ENCODE measurements at regions of chr5 and their contacts with region 1.

Region 1: GRCh38 chr5:169583424-169584204 is at the start of gene SPDL1:
- DNase-seq: peak; percentile 87 to 97 (median 93)
- ATAC-seq: peak; percentile 93
- H3K4me3 ChIP-seq: peak within 1 kb of the TSS; percentile 76 to 89
- H3K4me3 Mint-ChIP-seq: peak within 1 kb of the TSS; percentile 99
- H3K27ac ChIP-seq: peak within 1 kb of the TSS; percentile 65 to 74
- H3K27ac Mint-ChIP-seq: peak within 1 kb of the TSS; percentile 94
- H3K4me1 ChIP-seq: peaks cover 5% of the 10 kb centered on the region
- H3K4me1 Mint-ChIP-seq: peaks cover 21% of the 10 kb centered on the region
- H3K27me3 ChIP-seq: no peaks in the 10 kb centered on the region
- H3K27me3 Mint-ChIP-seq: no peaks in the 10 kb centered on the region
- CTCF ChIP-seq: no peak
- total RNA-seq, gene SPDL1: 5.2 to 6.9 TPM

Region 2: GRCh38 chr5:168486136-168486879 is 1097.3 kb before region 1 on chr5 and contains the start of gene RARS1:
- CTCF ChIA-PET with region 1: no interaction called
- POLR2A ChIA-PET with region 1: no interaction called
- intact Hi-C with region 1: loop called (anchors 2 kb)
- DNase-seq: peak; percentile 73 to 94 (median 88)
- ATAC-seq: peak; percentile 89
- H3K4me3 ChIP-seq: peak within 1 kb of the TSS; percentile 94 to 96
- H3K4me3 Mint-ChIP-seq: peak within 1 kb of the TSS; percentile 100
- H3K27ac ChIP-seq: peak within 1 kb of the TSS; percentile 71 to 79
- H3K27ac Mint-ChIP-seq: peak within 1 kb of the TSS; percentile 96
- H3K4me1 ChIP-seq: peaks cover 15% of the 10 kb centered on the region
- H3K4me1 Mint-ChIP-seq: peaks cover 37% of the 10 kb centered on the region
- H3K27me3 ChIP-seq: no peaks in the 10 kb centered on the region
- H3K27me3 Mint-ChIP-seq: peaks cover 5% of the 10 kb centered on the region
- CTCF ChIP-seq: peak; percentile 96
- total RNA-seq, gene RARS1: 80.2 to 91.9 TPM

Region 3: DNA sequence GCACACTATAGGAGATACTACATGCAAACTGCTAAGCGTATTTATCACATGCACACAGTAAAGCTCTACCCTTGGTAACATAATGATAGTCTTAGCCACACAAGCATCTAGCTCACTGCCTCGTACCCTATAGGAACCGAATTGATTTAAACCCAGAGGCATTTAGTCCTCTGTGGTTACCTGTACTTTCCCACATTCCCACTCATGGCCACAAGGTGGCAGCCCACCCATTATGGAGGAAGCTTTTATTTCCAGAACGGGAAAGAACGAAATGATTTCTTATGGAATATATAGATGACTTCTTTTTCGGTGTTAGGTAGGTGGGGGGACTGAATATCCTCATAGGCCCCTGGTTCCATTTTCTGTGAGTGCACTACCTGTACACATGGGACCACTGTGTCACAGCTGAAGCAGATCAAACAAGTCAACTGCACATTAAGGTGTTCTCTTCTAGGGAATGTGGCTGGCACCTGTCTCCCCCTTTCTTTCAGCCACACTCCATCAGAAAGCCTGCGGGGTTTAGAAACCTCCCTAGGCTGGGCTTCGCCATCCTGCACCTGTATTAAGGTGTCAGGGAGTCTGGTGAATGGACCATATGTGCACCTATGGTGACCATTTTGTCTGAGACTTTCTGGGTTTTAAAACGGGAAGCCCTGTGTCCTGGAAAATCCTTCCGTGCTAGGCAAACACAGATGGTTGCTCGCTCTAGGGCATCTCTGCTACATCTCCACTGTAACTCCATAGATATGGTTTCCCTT is 595.9 kb before region 1 on chr5:
- CTCF ChIA-PET with region 1: interaction called, 20 read pairs
- POLR2A ChIA-PET with region 1: interaction called, 4 read pairs
- intact Hi-C with region 1: loop called in 1 of 2 experiments (anchors 1 kb)
- DNase-seq: peak in 7 of 9 experiments; percentile 26 to 57 (median 45)
- ATAC-seq: no peak
- H3K4me3 ChIP-seq: no peak overlapping the region
- H3K4me3 Mint-ChIP-seq: no peak overlapping the region
- H3K27ac ChIP-seq: no peak overlapping the region
- H3K27ac Mint-ChIP-seq: no peak overlapping the region
- H3K4me1 ChIP-seq: no peaks in the 10 kb centered on the region
- H3K4me1 Mint-ChIP-seq: no peaks in the 10 kb centered on the region
- H3K27me3 ChIP-seq: peaks cover 0 to 5% of the 10 kb centered on the region in 2 experiments
- H3K27me3 Mint-ChIP-seq: peaks cover 15% of the 10 kb centered on the region
- CTCF ChIP-seq: peak; percentile 64

Region 4: DNA sequence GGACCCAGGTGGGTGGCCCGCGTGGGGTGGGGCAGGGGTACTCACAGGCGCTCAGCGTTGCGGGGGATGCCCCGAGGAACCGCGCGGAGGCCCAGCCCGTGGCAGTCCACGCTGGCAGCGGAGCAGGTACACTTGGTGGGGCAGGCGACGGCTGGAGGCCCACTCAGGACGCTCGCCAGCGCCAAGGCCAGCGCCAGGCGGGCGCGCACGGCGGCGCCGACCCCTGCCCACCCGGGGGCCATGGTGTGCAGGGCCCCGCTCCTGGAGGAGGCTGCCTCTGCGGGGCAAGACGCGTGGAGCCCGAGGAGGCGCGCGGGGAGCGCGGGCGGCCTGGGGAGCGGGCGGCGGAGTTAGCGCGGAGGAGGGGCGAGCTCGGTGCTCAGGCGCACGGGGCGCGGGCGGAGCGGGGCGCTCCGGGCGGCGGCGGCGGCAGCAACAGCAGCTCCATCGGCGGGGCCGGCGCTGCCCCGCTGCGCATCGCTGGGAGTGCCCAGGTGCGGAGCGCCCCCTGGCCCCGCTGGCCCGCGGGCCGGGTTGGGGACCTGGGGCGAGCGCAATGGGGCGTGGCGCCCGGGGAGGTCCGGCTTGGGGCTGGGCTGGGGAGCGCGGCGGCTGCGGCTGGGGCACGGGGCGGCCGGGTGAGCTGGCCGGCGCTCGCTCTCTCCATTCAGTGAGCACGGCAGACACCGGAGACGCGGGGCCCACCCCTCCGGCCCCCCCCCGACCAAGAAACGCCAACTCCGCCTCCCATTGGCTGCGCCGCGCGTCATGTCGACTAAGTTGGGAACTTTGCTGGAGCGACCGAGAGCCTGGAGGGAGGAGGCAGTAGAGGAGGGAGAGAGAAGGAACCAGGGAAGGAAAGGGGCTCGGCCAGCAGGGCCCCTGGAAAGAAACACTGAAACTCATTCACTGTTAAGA is 282.9 kb before region 1 on chr5 and contains the start of gene SLIT3:
- CTCF ChIA-PET with region 1: no interaction called
- POLR2A ChIA-PET with region 1: no interaction called
- intact Hi-C with region 1: no loop called
- DNase-seq: no peak
- ATAC-seq: no peak
- H3K4me3 ChIP-seq: no peak within 1 kb of the TSS
- H3K4me3 Mint-ChIP-seq: no peak within 1 kb of the TSS
- H3K27ac ChIP-seq: no peak within 1 kb of the TSS
- H3K27ac Mint-ChIP-seq: no peak within 1 kb of the TSS
- H3K4me1 ChIP-seq: no peaks in the 10 kb centered on the region
- H3K4me1 Mint-ChIP-seq: peaks cover 8% of the 10 kb centered on the region
- H3K27me3 ChIP-seq: peaks cover 3 to 8% of the 10 kb centered on the region in 2 experiments
- H3K27me3 Mint-ChIP-seq: peaks cover 41% of the 10 kb centered on the region
- CTCF ChIP-seq: no peak
- total RNA-seq, gene SLIT3: not detected

Region 5: DNA sequence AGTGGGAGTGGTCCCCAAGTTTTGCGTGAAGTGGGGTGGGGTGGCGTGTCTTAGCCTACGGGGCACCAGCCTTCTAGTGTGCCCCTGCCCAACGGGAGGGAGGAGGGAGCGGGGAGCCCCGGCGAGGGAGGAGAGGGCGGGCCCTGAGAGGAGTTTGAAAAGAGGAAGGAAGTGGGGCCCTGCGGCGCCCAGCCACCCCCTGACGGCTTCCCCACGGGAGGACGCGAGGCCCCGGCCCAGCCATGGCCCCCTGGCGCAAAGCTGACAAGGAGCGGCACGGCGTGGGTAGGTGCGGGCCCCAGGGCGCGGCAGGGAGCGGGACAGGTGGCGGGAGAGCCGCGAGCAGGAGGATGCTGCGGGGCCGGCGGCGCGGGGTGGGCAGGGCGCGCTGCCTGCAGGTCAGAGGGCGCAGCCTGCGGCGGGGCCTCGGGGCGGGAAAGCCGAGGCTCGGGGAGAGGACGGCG is 53.5 kb after region 1 on chr5 and contains the start of gene DOCK2:
- CTCF ChIA-PET with region 1: interaction called, 4 read pairs
- POLR2A ChIA-PET with region 1: interaction called, 7 read pairs
- intact Hi-C with region 1: loop called (anchors 1 to 2 kb)
- DNase-seq: peak; percentile 18 to 79 (median 72)
- ATAC-seq: peak; percentile 76
- H3K4me3 ChIP-seq: peak within 1 kb of the TSS; percentile 70 to 92
- H3K4me3 Mint-ChIP-seq: peak within 1 kb of the TSS; percentile 94
- H3K27ac ChIP-seq: peak within 1 kb of the TSS; percentile 76 to 90
- H3K27ac Mint-ChIP-seq: peak within 1 kb of the TSS; percentile 94
- H3K4me1 ChIP-seq: peaks cover 36% of the 10 kb centered on the region
- H3K4me1 Mint-ChIP-seq: peaks cover 50% of the 10 kb centered on the region
- H3K27me3 ChIP-seq: no peaks in the 10 kb centered on the region
- H3K27me3 Mint-ChIP-seq: no peaks in the 10 kb centered on the region
- CTCF ChIP-seq: no peak
- total RNA-seq, gene DOCK2: 194 to 197 TPM

Region 6: DNA sequence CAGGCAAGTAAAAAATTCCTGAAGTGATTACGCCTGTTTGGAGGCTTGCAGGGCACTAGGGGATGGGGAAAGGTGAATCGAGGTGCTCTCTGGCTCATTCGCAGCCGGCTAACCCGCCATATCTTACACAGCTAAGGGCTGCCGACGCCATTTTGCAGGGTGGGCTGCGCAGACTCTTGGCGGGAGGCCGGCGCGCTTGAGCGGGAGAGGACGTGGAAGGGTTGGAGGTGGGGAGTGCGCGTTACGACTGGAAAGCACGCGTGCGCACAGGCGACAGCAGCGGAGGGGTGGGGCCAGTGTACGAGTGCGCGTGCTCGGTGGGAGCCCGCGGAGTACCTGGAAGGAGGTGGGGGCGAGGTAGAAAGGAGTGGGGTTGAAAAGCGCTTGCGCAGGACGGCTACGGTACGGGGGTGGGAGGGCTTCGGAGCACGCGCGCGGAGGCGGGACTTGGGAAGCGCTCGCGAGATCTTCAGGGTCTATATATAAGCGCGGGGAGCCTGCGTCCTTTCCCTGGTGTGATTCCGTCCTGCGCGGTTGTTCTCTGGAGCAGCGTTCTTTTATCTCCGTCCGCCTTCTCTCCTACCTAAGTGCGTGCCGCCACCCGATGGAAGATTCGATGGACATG is 1803.8 kb after region 1 on chr5 and contains the start of gene NPM1:
- CTCF ChIA-PET with region 1: no interaction called
- POLR2A ChIA-PET with region 1: no interaction called
- intact Hi-C with region 1: loop called in 1 of 2 experiments (anchors 10 kb)
- DNase-seq: peak; percentile 95 to 100 (median 97)
- ATAC-seq: peak; percentile 88
- H3K4me3 ChIP-seq: peak within 1 kb of the TSS; percentile 92 to 96
- H3K4me3 Mint-ChIP-seq: peak within 1 kb of the TSS; percentile 96
- H3K27ac ChIP-seq: peak within 1 kb of the TSS; percentile 94 to 97
- H3K27ac Mint-ChIP-seq: peak within 1 kb of the TSS; percentile 99
- H3K4me1 ChIP-seq: peaks cover 45% of the 10 kb centered on the region
- H3K4me1 Mint-ChIP-seq: peaks cover 46% of the 10 kb centered on the region
- H3K27me3 ChIP-seq: no peaks in the 10 kb centered on the region
- H3K27me3 Mint-ChIP-seq: peaks cover 3% of the 10 kb centered on the region
- CTCF ChIP-seq: no peak
- total RNA-seq, gene NPM1: 1,297 to 1,299 TPM